PC-3 (cell line): ENCODE measurements at regions of chr3 and their contacts with region 1.

Region 1: DNA sequence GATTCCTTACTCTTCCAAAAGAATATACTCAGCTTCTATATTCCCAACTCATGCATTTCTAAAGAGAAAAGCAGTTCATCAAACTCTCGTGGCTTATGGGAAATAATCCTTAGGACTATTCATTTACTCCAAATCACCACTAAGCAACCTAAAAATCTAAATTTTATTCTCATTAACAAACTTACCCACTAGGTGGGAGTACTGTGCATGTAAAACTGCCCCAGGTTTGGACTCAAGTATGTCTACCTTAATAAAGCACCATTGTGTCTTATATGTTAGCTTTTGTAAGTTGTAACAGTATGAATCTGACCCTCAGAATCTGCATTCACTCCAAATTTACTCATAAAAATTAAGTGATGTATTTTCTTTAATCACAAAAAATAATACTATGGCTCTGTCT is 25.3 kb downstream of the RAD18 start:
- DNase-seq: peak; percentile 66
- ATAC-seq: peak; percentile 52
- H3K4me3 ChIP-seq: peak overlapping the region; percentile 29; the same call in 1 of the 2 replicates
- H3K27ac ChIP-seq: peak overlapping the region; percentile 81
- H3K4me1 ChIP-seq: peaks cover 29% of the 10 kb centered on the region
- H3K27me3 ChIP-seq: no peaks in the 10 kb centered on the region
- CTCF ChIP-seq: peak; percentile 75

Region 2: GRCh38 chr3:8678751-8679150 is 259.3 kb before region 1 on chr3:
- CTCF ChIA-PET with region 1: no interaction called
- POLR2A ChIA-PET with region 1: no interaction called
- intact Hi-C with region 1: loop called (anchors 2 kb)
- DNase-seq: no peak
- ATAC-seq: no peak
- H3K4me3 ChIP-seq: no peak overlapping the region
- H3K27ac ChIP-seq: no peak overlapping the region
- H3K4me1 ChIP-seq: peaks cover 32% of the 10 kb centered on the region
- H3K27me3 ChIP-seq: no peaks in the 10 kb centered on the region
- CTCF ChIP-seq: no peak

Region 3: GRCh38 chr3:8869613-8870012 is 68.4 kb before region 1 on chr3:
- CTCF ChIA-PET with region 1: no interaction called
- POLR2A ChIA-PET with region 1: no interaction called
- intact Hi-C with region 1: loop called (anchors 1 kb)
- DNase-seq: peak; percentile 99
- ATAC-seq: peak; percentile 95
- H3K4me3 ChIP-seq: no peak overlapping the region
- H3K27ac ChIP-seq: peak overlapping the region; percentile 94
- H3K4me1 ChIP-seq: peaks cover 57% of the 10 kb centered on the region
- H3K27me3 ChIP-seq: no peaks in the 10 kb centered on the region
- CTCF ChIP-seq: no peak